OCI-LY7 (cell line): ENCODE measurements at regions of chr2 and their contacts with region 1.

Region 1: DNA sequence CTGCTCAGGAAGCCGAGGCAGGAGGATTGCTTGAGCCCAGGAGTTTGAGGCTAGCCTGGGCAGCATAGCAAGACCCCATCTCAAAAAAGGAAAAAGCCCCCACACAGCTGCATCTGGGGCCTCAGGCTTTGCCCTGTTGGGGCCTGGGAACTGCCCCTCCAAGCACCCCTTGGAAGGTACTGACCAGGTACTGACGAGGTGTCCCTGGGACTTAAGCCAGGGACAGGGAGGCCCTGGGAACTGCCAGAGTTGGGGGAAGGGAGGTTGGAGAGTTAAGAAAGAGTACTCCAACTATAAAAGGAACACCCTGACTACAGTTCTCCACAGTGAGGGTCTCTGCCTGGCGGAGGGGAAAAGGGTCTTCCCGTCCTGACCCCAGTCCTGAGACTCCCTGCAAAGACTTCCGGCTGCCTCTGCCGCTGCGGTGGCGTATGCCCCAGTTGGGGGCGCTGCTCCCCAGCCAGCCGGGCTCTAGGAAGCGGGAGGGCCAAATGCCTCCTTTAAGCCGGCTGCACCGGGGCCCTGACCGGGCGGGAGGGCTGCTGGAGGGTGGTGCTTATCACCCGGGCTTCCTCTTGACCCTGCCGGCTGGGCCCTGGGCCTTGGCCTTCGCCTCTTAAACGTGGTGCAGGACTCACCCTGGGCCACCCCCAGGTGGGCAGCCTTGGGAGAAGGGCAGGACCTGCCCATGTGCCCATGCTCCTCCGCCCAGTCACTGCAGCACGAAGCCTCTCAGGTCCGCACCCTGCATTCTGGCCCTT is 12.8 kb downstream of the SLC30A3 start:
- DNase-seq: peak; percentile 91
- H3K4me3 ChIP-seq: peak overlapping the region; percentile 58
- H3K27ac ChIP-seq: peak overlapping the region; percentile 92
- H3K4me1 ChIP-seq: peaks cover 43% of the 10 kb centered on the region
- CTCF ChIP-seq: peak; percentile 97

Region 2: GRCh38 chr2:27191053-27191829 is 58.8 kb before region 1 on chr2:
- CTCF ChIA-PET with region 1: no interaction called
- POLR2A ChIA-PET with region 1: no interaction called
- intact Hi-C with region 1: loop called (anchors 2 kb)
- DNase-seq: peak; percentile 89
- H3K4me3 ChIP-seq: no peak overlapping the region
- H3K27ac ChIP-seq: peak overlapping the region; percentile 32
- H3K4me1 ChIP-seq: peaks cover 56% of the 10 kb centered on the region
- CTCF ChIP-seq: peak; percentile 97

Region 3: DNA sequence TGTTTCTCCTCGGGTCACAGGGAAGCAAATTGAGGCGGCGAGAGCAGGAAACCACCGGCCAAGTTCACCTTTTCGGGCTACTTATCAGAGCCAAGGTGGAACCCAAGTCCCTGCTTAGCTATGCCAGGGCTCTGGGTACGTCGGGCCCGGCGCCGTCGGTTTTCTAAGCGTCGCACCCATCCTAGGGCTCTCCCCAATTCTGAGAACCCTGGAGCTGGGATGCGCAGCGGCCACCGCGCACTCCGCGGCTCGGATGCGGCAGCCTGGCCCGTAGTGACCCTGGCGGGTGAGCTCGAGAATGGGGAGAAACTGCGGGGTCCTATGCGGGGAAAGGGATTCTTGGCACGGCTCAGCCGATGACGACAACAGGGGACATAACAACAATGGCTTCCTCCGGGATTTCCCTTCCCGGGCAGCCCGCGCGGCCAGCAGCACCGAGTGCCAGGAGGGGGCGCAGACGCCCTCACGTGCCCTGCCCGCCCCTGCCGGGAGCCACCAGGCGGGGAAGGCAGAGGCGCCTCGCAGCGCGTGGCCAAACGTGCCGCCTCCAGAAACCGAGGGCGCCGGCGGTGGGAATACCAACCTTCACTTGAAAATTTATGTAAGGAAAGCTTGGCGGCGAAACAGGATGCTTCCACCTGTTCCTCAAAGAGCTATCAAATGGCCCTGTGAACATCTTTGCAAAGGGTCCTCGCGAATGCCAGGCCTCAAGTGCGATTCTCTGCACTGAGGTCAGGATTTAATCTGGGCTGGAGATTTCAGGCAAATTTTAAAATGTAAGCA is 14.9 kb after region 1 on chr2:
- CTCF ChIA-PET with region 1: interaction called, 7 read pairs
- POLR2A ChIA-PET with region 1: interaction called, 6 read pairs
- intact Hi-C with region 1: loop called (anchors 1 kb)
- DNase-seq: peak; percentile 71
- H3K4me3 ChIP-seq: peak overlapping the region; percentile 90
- H3K27ac ChIP-seq: peak overlapping the region; percentile 23
- H3K4me1 ChIP-seq: peaks cover 54% of the 10 kb centered on the region
- CTCF ChIP-seq: peak; percentile 79

Region 4: DNA sequence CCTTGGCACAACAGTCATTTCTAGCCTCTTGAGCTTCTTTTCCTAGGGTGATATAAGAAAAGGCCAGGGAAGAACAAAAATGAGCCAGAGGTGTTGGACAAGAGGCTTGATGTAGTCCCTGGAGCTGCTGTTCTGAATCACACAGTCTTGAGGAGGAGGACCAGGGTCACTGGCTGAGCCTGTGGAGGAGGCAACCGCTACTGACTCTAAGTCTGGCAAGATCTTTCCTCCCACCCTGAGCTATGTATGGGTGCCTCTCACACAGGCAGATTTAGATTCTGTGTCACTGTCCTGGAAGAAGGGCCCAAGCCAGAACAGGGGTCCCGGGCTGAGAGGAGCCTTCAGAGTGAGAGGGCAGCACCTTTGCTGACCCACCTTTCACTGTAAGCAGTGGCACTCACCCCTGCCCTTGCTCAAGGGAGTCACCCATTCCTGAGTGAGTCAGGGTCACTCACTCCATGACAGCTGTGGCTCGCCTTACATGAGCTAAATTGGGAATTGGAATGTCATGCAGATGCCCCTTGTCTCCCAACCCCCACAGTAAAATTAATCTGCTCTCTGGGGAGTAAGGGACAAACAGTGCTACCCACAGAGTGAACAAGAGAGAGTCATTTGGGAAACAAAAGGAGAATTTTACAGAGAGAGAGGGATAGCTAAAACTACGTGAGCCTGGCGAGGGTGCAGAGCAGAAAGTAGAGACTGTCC is 31.9 kb after region 1 on chr2 and contains the start of gene TRIM54:
- CTCF ChIA-PET with region 1: interaction called, 10 read pairs
- POLR2A ChIA-PET with region 1: interaction called, 21 read pairs
- intact Hi-C with region 1: loop called (anchors 1 kb)
- DNase-seq: no peak
- H3K4me3 ChIP-seq: no peak within 1 kb of the TSS
- H3K27ac ChIP-seq: no peak within 1 kb of the TSS
- H3K4me1 ChIP-seq: peaks cover 40% of the 10 kb centered on the region
- CTCF ChIP-seq: no peak
- total RNA-seq, gene TRIM54: 2.1 and 6.4 TPM in 2 replicates

Region 5: DNA sequence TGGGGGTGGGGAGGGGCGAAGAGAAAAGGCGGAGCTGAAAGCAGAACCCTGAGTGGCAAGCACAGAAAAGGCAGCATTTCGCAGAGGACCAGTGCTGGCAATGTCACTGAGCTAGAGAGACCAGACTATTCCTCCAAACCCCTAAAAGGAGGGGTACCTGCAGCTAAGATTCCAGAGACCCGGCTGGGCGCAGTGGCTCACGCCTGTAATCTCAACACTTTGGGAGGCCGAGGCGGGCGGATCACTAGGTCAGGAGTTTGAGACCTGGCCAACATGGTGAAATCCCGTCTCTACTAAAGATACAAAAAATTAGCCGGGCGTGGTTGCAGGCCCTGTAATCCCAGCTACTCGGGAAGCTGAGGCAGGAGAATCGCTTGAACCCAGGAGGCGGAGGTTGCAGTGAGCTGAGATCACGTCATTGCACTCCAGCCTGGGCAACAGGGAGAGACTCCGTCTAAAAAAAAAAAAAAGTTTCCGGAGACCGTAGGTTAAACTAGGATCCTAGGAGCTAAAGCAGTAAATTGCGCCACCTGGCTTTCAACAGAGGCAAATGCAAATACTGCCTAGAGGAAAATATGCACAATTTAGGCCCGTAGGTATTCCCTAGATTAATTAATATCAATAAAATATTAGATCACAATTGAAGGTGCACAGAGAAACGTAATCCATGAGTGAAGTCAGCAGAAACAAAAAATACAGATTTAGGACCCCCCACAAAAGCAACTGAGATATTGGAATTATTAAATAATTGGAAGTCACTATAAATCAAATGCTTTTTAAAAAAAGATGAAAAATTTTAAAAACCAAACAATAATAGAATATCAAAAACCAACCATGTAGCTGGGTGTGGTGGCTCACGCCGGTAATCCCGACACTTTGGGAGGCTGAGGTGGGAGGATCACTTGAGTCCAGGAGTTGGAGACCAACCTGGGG is 53.3 kb after region 1 on chr2:
- CTCF ChIA-PET with region 1: interaction called, 9 read pairs
- POLR2A ChIA-PET with region 1: interaction called, 16 read pairs
- intact Hi-C with region 1: loop called (anchors 1 kb)
- DNase-seq: peak; percentile 90
- H3K4me3 ChIP-seq: peak overlapping the region; percentile 61
- H3K27ac ChIP-seq: peak overlapping the region; percentile 43
- H3K4me1 ChIP-seq: peaks cover 14% of the 10 kb centered on the region
- CTCF ChIP-seq: peak; percentile 92